ENCODE measurements at regions of chr9 and their contacts with region 1.

Region 1: DNA sequence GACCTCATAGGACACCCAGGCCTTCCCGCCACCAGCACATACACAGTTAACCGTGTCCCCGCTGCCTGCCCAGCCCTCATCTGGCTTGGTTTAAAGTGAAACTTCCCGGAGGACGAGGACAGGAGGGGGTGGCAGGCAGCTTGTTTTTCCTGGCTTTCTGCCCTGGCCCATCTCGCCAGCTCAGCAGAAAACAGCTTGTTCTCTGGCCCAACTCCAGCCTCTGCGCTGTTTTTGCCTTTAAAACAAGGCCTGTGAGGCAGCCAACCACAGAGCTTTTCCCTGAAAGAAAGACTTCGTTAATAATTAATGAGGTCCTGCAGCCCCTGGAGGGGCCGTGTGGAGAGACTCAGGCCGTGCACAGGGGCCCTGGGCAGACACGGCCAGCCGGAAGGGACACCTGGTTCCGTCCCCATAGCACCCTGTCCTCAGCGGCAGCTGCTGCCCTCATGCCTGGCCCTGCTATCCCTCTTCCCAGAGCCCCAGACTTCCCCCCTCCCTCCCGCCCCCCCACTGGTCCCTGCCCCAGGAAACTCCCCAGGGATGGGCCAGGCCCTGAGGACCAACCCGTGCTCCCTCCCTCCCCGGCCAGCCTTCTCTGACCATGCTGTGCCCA is 108.7 kb downstream of the RXRA start:
- DNase-seq: no peak
- H3K4me3 ChIP-seq: peak overlapping the region in 2 of 4 donors; percentile 20 to 53
- H3K27ac ChIP-seq: peak overlapping the region; percentile 87 to 95 (median 92)
- H3K4me1 ChIP-seq: peaks cover 69 to 88% (median 76%) of the 10 kb centered on the region in 3 donors
- H3K27me3 ChIP-seq: no peaks in the 10 kb centered on the region
- CTCF ChIP-seq: no peak
- POLR2A ChIP-seq: no peak

Region 2: GRCh38 chr9:134125413-134126095 is 309.4 kb before region 1 on chr9:
- intact Hi-C with region 1: no loop called
- DNase-seq: no peak
- H3K4me3 ChIP-seq: no peak overlapping the region
- H3K27ac ChIP-seq: no peak overlapping the region
- H3K4me1 ChIP-seq: peaks cover 4 to 21% (median 8%) of the 10 kb centered on the region in 3 donors
- H3K27me3 ChIP-seq: no peaks in the 10 kb centered on the region
- CTCF ChIP-seq: no peak
- POLR2A ChIP-seq: no peak

Region 3: DNA sequence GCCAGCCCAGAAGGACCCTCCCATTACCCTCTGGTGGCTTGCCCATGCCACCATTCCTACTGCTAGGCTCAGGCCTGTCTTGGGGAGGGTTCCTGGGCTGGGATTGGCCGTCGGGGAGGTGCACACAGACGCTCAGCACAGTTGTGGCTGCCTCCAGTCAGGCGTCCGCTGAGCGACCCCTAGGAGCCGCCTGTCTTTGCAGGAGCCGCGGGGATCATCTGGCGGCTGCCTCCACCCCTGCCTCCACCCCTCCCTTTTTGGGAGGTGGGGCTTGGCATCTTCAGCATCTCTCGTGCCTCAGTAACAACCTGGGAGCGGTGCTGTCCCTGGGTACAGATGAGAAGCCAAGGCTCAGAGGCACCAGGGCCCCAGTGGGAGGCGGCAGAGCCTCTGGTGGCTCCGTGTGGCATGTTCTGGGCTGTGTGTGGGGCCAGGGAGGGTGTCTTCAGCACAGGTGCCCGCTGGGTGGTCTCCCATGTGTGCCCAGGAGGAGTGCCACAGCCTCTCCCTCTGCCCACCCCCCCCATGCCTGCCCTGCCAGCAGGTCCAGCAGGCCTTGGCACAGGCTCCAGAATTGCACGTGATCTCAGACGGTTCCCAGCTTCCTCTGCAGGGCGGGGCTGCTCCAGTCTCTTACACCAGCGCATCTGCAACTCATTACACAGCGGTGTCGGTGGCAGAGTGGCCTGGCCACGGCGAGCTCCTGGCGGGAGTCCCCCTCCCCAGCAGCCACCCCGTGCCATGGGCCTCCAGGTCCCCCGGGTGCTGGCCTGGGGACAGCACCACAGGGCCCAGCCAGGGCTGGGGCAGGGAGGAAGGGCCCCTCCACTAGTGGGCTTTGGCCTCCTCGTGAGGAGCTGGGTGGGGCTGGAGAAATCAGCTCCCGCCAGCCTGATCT is 69.0 kb before region 1 on chr9:
- intact Hi-C with region 1: loop called (anchors 10 kb)
- DNase-seq: peak; percentile 37
- H3K4me3 ChIP-seq: peak overlapping the region in 3 of 4 donors; percentile 7 to 57 (median 30)
- H3K27ac ChIP-seq: peak overlapping the region; percentile 88 to 94 (median 92)
- H3K4me1 ChIP-seq: peaks cover 74 to 96% (median 82%) of the 10 kb centered on the region in 3 donors
- H3K27me3 ChIP-seq: no peaks in the 10 kb centered on the region
- CTCF ChIP-seq: peak in 1 of 6 experiments; percentile 3
- POLR2A ChIP-seq: peak in 2 of 4 donors; percentile 73 to 77